ENCODE measurements at regions of chr9 and their contacts with region 1.

Region 1: DNA sequence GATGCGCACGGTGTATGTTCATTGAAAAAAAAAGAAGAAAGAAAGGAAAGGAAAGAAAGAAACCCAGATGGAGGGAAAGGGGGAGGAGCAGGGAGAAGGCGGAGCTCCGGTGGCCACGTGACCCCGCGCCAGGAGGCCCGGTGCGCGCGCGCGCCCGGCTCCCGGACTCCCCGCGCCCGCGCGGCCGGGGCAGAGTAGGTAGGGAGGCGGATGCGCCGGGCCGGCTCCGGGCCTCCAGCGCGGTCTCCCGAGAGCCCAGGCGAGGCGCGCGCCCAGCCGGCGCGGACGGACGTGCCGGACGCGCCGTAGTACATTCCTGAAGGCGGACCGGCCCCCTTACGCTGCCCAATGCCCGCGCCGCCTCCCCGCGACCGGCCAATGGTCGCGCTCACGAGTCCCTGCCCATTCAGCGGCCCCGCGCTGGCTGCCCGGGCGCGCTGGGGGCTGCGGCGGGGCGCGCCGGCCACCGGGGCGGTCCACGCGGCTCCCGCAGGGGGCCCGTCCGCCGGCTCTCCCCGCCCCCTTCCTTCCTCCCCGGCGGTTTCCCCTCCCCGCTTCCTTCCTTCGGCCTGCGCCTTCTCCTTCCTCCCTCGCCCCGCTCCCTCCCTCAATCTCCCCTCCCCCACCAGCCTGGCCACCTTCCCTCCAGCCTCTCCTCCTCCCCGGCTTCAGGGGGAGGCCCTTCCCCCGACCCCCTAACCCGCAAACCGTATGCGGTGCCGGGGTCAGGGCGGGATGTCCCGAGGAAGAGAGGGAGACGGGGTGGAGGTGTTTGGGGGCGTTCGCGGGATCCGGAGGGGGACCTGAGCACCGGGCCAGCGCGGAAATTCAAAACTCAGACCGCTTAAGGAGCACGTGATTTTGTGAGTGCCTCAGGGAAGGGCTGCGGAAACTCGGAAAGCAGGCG is 5.8 kb downstream of the PTCH1 start:
- ATAC-seq: peak; percentile 55 to 75 (median 62)
- H3K4me3 ChIP-seq: peak overlapping the region; percentile 77 to 92 (median 87)
- H3K27ac ChIP-seq: peak overlapping the region; percentile 89 to 94
- H3K4me1 ChIP-seq: peaks cover 7 to 10% of the 10 kb centered on the region in 2 donors

Region 2: GRCh38 chr9:95764533-95765319 is 253.8 kb after region 1 on chr9:
- in situ Hi-C with region 1: loop called in 1 of 9 experiments (anchors 10 kb)
- ATAC-seq: peak; percentile 46 to 94 (median 72)
- H3K4me3 ChIP-seq: no peak overlapping the region
- H3K27ac ChIP-seq: peak overlapping the region in 1 of 2 donors; percentile 69
- H3K4me1 ChIP-seq: peaks cover 21 to 25% of the 10 kb centered on the region in 2 donors

Region 3: GRCh38 chr9:95875305-95876137 is 364.6 kb after region 1 on chr9 and contains the start of gene ERCC6L2:
- in situ Hi-C with region 1: loop called in 2 of 9 experiments (anchors 25 kb)
- ATAC-seq: peak; percentile 85 to 91 (median 89)
- H3K4me3 ChIP-seq: no peak within 1 kb of the TSS
- H3K27ac ChIP-seq: no peak within 1 kb of the TSS
- H3K4me1 ChIP-seq: peaks cover 8 to 12% of the 10 kb centered on the region in 2 donors
- total RNA-seq, gene ERCC6L2: 41.4 to 80.6 (median 63.1) TPM

Measured in motor neuron (in vitro differentiated cells).